Adrenal gland (tissue), 19 donors: ENCODE measurements at regions of chr1 and their contacts with region 1.

Region 1: GRCh38 chr1:33610864-33611455 is 138.5 kb downstream of the ZSCAN20 start:
- DNase-seq: no peak
- H3K4me3 ChIP-seq: no peak overlapping the region
- H3K27ac ChIP-seq: no peak overlapping the region
- H3K4me1 ChIP-seq: no peaks in the 10 kb centered on the region
- H3K27me3 ChIP-seq: no peaks in the 10 kb centered on the region
- CTCF ChIP-seq: no peak
- POLR2A ChIP-seq: no peak

Region 2: GRCh38 chr1:33472349-33472980 is 138.5 kb before region 1 on chr1 and contains the start of gene ZSCAN20:
- intact Hi-C with region 1: loop called (anchors 5 to 10 kb)
- DNase-seq: peak; percentile 96 to 100 (median 98)
- H3K4me3 ChIP-seq: peak within 1 kb of the TSS in 3 of 4 donors; percentile 44 to 82 (median 74)
- H3K27ac ChIP-seq: peak within 1 kb of the TSS in 3 of 5 donors; percentile 48 to 68 (median 58)
- H3K4me1 ChIP-seq: peaks cover 9 to 28% of the 10 kb centered on the region in 2 donors
- H3K27me3 ChIP-seq: no peaks in the 10 kb centered on the region
- CTCF ChIP-seq: no peak
- POLR2A ChIP-seq: peak in 1 of 2 donors; percentile 30
- total RNA-seq, gene ZSCAN20: 3.6 to 12.7 (median 5.4) TPM

Region 3: DNA sequence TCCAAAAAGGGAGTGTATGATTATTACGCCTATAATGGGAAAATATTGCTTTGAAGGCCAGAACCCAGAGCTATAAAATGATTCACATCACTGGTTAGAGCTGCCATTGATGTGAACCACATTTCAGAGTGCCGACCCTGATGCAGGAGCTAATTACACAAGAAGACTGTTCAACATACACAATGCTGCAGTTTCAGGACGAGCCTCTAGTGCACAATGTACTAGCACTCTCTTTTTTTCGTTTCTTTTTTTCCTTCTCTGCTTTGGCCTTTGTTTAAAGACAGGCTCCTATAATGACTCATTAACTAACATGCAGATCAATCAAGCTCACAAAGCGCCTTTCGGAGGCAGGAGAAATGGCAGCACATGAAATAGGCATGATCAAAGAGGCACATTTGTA is 186.9 kb after region 1 on chr1:
- intact Hi-C with region 1: no loop called
- DNase-seq: no peak
- H3K4me3 ChIP-seq: no peak overlapping the region
- H3K27ac ChIP-seq: no peak overlapping the region
- H3K4me1 ChIP-seq: no peaks in the 10 kb centered on the region
- H3K27me3 ChIP-seq: no peaks in the 10 kb centered on the region
- CTCF ChIP-seq: no peak
- POLR2A ChIP-seq: no peak